Dendritic cell treated with granulocyte-macrophage colony-stimulating factor and Interleukin-4, amounts not matched to agents 40 ng/mL and 50 ng/mL, for 4 days (primary cell): ENCODE measurements at regions of chr10 and their contacts with region 1.

Region 1: DNA sequence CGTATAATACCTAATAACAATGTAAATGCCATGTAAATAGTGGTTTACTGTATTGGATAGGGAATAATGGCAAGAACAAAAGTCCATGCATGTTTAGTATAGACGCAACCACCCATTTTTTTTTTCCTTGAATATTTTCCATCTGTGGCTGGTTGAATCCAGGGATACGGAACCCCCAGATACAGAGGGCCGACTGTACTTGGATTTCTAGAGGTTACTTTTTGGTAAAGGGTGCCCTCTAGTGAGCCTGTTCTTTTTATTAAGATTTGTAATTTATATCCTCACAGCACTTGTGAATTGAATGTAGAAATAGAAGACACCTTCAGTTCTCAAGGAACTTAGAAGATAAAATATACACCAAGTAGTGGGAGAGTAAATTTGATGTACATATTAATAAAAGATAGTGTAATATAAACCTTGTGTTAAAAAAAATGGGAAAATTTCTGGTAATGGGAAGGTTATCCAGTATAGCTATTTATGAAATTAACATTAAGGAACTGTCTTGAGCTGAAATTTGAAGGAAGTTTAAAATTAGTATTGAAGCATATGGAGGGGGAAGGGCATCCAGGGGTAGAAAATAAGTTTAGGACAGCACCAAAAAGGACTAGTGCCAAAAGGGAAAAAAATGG is 32.0 kb downstream of the EXOC6 start:
- H3K4me3 Mint-ChIP-seq: no peak overlapping the region
- H3K27ac Mint-ChIP-seq: no peak overlapping the region
- H3K4me1 Mint-ChIP-seq: peaks cover 16% of the 10 kb centered on the region
- H3K27me3 Mint-ChIP-seq: no peaks in the 10 kb centered on the region

Region 2: DNA sequence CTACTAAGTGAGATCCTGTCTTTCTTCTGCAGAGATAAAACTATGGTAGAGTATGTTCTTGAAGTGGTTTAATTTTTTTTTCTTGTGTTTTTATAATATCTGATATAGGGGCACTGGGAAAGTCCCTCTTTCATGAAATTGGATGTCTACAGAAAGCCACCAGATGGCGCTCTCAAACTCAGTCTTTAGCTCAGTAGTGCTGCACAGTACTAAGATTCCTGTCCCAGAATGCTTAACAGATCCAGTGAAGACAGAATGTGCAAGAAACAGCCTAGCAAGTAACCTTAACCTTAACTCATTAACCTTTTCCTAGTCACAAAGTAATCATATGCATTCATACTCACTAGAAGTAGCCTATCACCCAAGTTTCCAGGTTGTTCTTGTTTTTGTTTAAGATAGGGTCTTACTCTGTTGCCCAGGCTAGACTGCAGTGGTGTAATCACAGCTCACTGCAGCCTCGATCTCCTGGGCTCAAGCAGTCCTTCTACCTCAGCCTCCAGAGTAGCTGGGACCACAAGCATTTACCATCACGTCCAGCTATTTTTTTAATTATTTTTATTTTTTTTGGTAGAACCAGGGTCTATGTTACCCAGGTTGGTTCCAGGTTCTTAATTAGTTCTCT is 363.2 kb before region 1 on chr10:
- intact Hi-C with region 1: loop called (anchors 10 kb)
- H3K4me3 Mint-ChIP-seq: no peak overlapping the region
- H3K27ac Mint-ChIP-seq: no peak overlapping the region
- H3K4me1 Mint-ChIP-seq: peaks cover 10% of the 10 kb centered on the region
- H3K27me3 Mint-ChIP-seq: no peaks in the 10 kb centered on the region

Region 3: GRCh38 chr10:92689663-92690210 is 190.6 kb before region 1 on chr10 and contains the start of gene HHEX:
- intact Hi-C with region 1: loop called (anchors 1 kb)
- H3K4me3 Mint-ChIP-seq: peak within 1 kb of the TSS; percentile 92
- H3K27ac Mint-ChIP-seq: peak within 1 kb of the TSS; percentile 96
- H3K4me1 Mint-ChIP-seq: peaks cover 50% of the 10 kb centered on the region
- H3K27me3 Mint-ChIP-seq: no peaks in the 10 kb centered on the region

Region 4: DNA sequence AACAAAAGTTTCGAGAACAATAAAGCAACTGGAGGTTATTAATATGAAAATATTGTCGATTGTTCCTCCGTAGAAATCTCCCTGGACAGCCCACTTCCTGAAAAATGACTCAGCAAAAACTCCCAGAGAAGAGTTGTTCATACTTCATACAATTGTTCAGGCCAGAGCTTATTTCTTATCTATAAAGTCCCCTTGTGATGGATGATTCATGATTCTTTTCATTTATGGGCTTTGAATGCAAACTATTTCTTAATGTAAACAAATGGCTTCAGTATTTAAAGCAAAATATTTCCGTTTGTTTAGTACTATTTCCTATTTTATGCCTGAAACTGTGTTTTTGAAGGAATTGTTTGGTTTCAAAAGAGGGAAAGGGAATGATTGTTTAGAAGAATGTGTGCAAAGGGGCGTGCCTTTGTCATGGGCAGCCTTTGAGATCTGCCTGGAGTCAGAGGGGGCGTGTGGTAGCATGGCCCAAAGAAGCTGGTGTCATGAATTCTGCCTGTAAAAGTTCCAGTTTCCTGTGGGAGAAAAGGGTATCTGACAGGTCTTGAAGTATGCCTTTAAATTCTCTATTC is 58.2 kb before region 1 on chr10:
- intact Hi-C with region 1: loop called (anchors 5 kb)
- H3K4me3 Mint-ChIP-seq: no peak overlapping the region
- H3K27ac Mint-ChIP-seq: peak overlapping the region; percentile 76
- H3K4me1 Mint-ChIP-seq: peaks cover 48% of the 10 kb centered on the region
- H3K27me3 Mint-ChIP-seq: peaks cover 1% of the 10 kb centered on the region

Region 5: GRCh38 chr10:92848441-92849233 is 31.7 kb before region 1 on chr10 and contains the start of gene EXOC6:
- intact Hi-C with region 1: loop called (anchors 1 kb)
- H3K4me3 Mint-ChIP-seq: peak within 1 kb of the TSS; percentile 79
- H3K27ac Mint-ChIP-seq: peak within 1 kb of the TSS; percentile 85
- H3K4me1 Mint-ChIP-seq: peaks cover 39% of the 10 kb centered on the region
- H3K27me3 Mint-ChIP-seq: no peaks in the 10 kb centered on the region

Region 6: GRCh38 chr10:93352638-93353383 is 472.5 kb after region 1 on chr10:
- intact Hi-C with region 1: loop called (anchors 10 kb)
- H3K4me3 Mint-ChIP-seq: no peak overlapping the region
- H3K27ac Mint-ChIP-seq: no peak overlapping the region
- H3K4me1 Mint-ChIP-seq: peaks cover 2% of the 10 kb centered on the region
- H3K27me3 Mint-ChIP-seq: no peaks in the 10 kb centered on the region